ENCODE measurements at regions of chr12 and their contacts with region 1.

Region 1: GRCh38 chr12:3299929-3300832 is 190.8 kb upstream of the PRMT8 start:
- DNase-seq: peak; percentile 83
- CTCF ChIP-seq: peak; percentile 95

Region 2: DNA sequence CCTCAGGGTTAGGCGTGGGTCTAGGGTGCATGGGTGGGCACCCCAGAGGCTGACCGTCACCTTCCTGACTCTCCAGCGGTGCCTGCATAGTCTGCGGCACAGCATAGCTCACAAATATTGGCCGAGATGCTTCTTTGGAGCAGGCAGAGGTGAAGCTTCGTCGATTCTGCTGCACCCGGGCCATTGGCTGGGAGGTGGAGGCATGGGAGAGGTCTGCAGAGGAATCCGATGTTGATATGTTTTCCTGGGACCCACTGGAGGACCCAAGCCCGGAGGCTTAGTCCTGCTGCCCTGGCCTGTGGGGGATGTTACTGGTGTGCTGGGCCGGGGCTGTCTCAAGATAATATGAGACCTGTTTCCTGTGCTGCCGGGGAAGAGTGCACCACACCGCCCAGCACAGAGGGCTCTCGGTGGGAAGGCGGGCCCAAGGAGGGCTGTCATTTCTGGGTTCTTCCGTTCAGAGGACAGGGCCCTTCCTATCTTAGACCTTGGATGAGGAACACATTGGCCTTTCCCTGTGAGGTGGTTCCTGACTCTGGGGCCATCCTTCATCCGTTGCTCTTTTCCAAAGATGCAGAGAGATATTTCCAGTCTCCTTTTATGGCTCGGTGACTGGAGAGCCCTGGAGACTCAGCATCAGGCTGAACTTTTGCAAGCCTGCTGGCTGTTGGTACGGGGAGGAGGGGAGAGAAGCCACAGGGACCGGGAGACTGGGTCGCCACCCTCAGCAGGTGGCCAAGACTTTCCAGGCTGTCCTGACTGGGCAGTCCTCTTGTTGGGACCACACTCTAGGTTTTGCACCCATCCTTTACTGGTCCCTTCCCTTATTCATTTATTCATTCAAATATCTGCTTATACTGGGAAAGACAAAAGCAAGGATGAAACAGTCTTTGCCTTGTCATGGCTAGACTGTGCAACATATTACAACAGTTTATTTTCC is 79.5 kb before region 1 on chr12:
- CTCF ChIA-PET with region 1: no interaction called
- POLR2A ChIA-PET with region 1: no interaction called
- DNase-seq: no peak
- CTCF ChIP-seq: no peak

Region 3: DNA sequence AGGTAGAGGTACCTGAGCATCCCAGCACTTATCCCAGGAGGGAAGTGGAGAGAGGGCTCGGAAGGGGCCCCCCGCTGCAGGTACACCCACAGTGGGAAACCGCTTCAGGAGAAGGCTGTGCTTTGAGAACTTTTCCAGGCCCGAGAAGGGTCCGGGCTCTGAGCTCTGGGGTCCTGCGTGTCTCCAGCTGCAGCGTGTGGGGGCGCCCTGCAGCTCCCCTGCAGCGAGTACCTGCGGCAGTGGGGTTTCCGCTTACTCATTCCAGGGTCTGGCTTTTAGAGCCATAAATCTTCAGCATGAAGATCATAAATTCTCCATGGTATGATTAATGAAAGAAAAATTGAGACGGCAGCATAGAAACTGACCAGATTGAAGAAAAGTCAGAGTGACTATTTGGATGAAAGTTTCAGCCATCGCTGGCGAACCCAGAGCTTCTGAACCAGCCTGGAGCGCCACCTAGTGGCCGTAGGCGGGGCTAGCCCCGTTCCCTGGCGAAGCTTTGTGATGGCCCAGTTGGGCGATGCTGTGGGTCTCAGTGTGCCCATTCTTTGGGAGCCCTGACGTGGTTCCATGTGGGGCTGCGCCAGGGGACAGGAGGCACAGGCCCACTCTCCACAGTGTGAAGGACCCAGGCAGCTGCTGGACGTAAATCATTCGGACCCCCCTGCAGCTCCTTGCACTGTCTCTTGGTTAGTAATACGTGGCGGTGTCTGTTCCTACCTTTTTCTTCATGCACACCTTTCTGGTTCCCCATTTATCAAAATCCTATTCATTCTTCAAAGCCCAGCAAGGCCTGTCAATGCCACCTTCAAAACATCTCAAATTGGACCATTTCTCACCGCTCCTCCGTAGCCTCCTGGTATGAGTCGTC is 24.8 kb before region 1 on chr12:
- CTCF ChIA-PET with region 1: interaction called, 30 read pairs
- POLR2A ChIA-PET with region 1: no interaction called
- DNase-seq: peak; percentile 87
- CTCF ChIP-seq: peak; percentile 89

Region 4: DNA sequence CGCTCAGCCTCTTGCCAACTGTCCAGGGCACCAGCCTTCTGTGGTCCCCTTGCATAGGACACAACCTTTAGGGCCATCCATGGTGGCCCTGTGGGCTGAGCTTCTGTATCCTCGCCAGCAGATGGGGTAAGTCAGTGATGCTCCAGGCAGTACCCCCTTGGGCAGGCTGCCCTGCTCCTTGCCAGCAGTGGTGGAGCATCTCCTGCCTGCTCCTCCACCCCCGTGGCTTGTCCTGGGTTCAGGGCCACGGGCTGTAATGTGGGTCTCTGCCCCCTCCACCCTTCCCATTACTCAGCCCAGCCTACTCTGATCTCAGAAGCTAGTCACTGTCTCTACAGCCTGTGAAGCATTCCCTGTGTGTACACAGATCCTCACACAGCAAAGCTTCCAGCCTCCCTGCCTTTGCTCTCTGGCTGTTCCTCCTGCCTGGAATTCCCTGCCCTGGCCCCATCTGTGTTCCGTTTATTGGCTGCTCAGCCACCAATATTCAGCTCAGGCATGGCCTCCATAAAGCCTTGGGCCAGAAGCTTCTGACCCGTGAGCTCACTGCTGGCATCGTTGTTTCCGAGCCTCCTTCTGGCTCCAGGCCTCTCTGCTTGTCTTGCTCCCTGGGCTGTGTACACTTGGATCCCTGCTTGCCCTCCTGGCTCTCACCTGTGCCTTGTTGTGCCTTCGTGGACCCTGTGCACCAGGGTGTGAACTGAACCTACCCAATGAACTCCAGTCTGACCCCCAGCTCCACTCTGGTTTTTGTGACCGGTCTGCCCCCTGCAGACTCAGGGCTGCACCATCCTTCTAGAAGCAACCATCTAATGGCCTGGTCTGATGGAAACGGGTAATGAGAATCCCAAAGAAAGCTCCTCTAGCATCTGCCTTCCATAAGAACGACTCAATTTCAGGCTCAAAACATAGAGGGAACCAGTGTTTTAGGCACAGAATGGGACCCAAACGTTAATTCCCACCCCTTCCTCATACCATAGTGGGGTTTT is 13.8 kb after region 1 on chr12:
- CTCF ChIA-PET with region 1: interaction called, 102 read pairs
- POLR2A ChIA-PET with region 1: no interaction called
- DNase-seq: peak; percentile 57
- CTCF ChIP-seq: peak; percentile 32

Region 5: DNA sequence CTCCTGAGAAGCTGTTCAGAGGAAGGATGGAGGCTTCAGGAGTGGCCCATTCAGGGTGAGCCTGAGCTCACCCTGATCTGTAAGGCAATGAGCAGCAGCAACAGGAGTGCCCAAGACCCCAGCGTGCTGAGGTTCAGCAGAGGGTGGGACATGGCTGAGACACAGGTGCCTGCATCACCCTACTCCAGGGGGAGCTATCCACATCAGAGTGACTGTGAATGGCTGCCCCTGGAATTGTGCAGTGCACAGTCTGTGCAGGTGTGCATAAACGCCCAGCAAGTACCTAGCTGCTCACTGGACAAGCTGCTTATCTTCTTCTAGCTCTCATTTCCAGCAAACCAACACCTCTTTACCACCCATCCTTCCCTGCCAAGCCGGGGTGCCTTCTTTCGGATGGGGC is 50.2 kb after region 1 on chr12:
- CTCF ChIA-PET with region 1: interaction called, 10 read pairs
- POLR2A ChIA-PET with region 1: no interaction called
- DNase-seq: no peak
- CTCF ChIP-seq: no peak

Region 6: GRCh38 chr12:3791256-3792252 is 491.4 kb after region 1 on chr12:
- CTCF ChIA-PET with region 1: interaction called, 27 read pairs
- POLR2A ChIA-PET with region 1: no interaction called
- DNase-seq: no peak
- CTCF ChIP-seq: no peak

Region 7: DNA sequence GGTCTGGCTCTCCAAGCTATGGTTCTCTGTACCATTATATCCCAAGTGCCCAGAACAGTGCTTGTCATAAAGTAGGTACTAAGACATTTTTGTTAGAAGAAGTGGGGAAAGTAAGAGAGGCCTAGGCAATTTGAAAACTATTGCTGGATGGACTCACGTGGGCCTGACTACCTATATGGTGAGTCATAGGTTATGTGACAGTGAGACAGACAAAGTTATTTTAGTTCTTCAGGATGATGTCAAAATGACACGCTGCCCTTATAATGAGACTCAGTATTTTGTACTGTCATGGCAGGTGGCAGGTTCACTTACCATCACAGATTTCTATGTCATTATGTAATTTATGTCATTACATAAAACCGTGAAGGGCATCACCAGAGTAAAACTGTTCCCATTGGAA is 519.9 kb after region 1 on chr12:
- CTCF ChIA-PET with region 1: interaction called, 23 read pairs
- POLR2A ChIA-PET with region 1: no interaction called
- DNase-seq: no peak
- CTCF ChIP-seq: no peak

Measured in GM10248 (cell line).